ENCODE measurements at regions of chr3 and their contacts with region 1.

Region 1: DNA sequence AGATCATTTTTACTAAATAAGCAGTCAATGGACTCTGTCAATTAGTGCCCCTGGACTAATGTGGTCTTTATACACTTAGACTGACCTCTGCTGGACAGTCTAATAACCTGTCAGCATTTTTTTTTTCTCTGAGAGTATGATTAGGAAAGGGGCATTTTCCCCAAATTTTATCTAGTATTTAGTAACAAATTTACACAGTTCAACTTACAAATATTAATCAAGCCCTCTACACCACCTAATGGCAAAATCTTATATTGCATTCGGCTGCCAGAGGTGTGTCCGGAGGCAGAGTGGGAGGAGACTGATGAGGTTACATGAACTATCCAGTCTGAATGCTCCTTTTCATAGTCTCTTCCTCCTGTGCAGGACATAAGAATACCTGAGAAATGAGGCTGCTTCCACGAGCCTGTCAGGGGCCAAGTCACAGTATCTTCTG is 36.0 kb upstream of the COLQ start:
- DNase-seq: no peak
- ATAC-seq: peak; percentile 68

Region 2: GRCh38 chr3:15361494-15362212 is 195.9 kb before region 1 on chr3:
- intact Hi-C with region 1: no loop called
- DNase-seq: no peak
- ATAC-seq: peak; percentile 41

Region 3: GRCh38 chr3:15439476-15439875 is 118.1 kb before region 1 on chr3:
- intact Hi-C with region 1: loop called (anchors 10 kb)
- DNase-seq: no peak
- ATAC-seq: no peak

Region 4: DNA sequence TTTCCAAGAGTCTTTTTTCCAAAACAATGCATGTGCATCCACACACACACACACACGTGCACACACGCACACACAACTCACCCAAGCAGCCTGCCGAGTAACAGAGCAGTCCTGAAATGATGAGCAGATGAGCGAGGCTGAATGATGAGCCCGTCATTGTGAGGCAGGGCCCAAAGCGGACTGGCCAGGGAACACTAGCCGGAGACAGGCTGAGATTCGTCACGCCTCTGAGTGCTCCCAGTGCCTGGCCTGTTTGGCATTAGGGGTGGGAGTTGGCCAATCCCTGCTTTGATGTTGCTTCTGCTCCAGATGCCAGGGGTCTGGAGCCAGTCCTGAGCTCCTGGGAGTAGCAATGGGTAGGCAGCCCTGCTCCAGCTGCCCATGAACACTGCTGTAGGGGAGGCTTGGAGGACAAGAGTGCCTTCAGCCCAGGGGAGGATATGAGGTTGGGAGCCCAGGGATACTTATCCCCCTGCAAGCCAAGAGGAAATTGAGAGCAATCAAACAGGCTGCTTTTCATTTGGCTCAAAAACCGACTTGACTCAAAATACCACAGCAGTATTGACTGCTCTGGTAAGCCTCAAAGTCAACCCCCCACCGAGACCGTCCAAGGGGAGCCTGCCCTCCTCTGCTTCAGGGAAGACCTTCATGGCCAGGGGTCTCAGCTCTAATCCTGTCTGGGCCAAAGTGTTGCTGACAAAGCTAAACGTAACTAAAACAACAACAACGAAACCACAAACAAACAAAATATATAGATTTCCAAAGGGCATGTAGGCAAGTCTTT is 58.9 kb before region 1 on chr3:
- intact Hi-C with region 1: loop called (anchors 1 kb)
- DNase-seq: no peak
- ATAC-seq: no peak

Region 5: GRCh38 chr3:15636003-15636709 is 78.6 kb after region 1 on chr3:
- intact Hi-C with region 1: no loop called
- DNase-seq: no peak
- ATAC-seq: peak; percentile 65

Measured in left ventricle myocardium superior (tissue), 1 donor.